PC-3 (cell line): ENCODE measurements at regions of chrX and their contacts with region 1.

Region 1: GRCh38 chrX:106481341-106481740 is 130.4 kb upstream of the RADX start:
- DNase-seq: peak; percentile 83
- ATAC-seq: peak; percentile 74
- H3K4me3 ChIP-seq: no peak overlapping the region
- H3K27ac ChIP-seq: no peak overlapping the region
- H3K4me1 ChIP-seq: no peaks in the 10 kb centered on the region
- H3K27me3 ChIP-seq: no peaks in the 10 kb centered on the region
- CTCF ChIP-seq: peak; percentile 77

Region 2: GRCh38 chrX:106170318-106170717 is 311.0 kb before region 1 on chrX:
- CTCF ChIA-PET with region 1: no interaction called
- POLR2A ChIA-PET with region 1: no interaction called
- intact Hi-C with region 1: no loop called
- DNase-seq: peak; percentile 53
- ATAC-seq: peak; percentile 51; the same call in 1 of the 2 replicates
- H3K4me3 ChIP-seq: no peak overlapping the region
- H3K27ac ChIP-seq: no peak overlapping the region
- H3K4me1 ChIP-seq: no peaks in the 10 kb centered on the region
- H3K27me3 ChIP-seq: peaks cover 37% of the 10 kb centered on the region
- CTCF ChIP-seq: peak; percentile 69

Region 3: GRCh38 chrX:106619797-106620196 is 138.5 kb after region 1 on chrX:
- CTCF ChIA-PET with region 1: no interaction called
- POLR2A ChIA-PET with region 1: no interaction called
- intact Hi-C with region 1: loop called (anchors 1 kb)
- DNase-seq: peak; percentile 34
- ATAC-seq: no peak
- H3K4me3 ChIP-seq: no peak overlapping the region
- H3K27ac ChIP-seq: no peak overlapping the region
- H3K4me1 ChIP-seq: no peaks in the 10 kb centered on the region
- H3K27me3 ChIP-seq: peaks cover 31% of the 10 kb centered on the region
- CTCF ChIP-seq: peak; percentile 66

Region 4: DNA sequence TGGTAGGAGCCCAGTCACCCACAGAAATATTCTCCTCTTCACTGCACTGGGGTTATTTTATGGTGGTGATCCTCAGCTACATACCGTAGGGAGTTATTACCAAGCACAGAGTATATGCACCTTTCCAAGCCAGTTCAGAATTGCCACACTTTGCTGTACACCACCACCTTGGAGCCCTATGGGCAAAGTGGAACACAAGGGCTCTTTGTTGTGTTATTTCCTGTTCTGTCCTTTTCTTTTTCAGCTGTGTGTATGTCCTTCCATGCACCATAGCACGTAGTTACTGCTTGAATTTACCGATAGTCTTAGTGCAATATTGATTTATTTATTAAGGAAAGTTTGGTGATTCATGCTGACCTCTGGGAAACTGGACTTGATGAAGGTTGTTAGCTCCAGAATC is 253.5 kb after region 1 on chrX:
- CTCF ChIA-PET with region 1: no interaction called
- POLR2A ChIA-PET with region 1: no interaction called
- intact Hi-C with region 1: no loop called
- DNase-seq: no peak
- ATAC-seq: no peak
- H3K4me3 ChIP-seq: no peak overlapping the region
- H3K27ac ChIP-seq: no peak overlapping the region
- H3K4me1 ChIP-seq: no peaks in the 10 kb centered on the region
- H3K27me3 ChIP-seq: peaks cover 19% of the 10 kb centered on the region
- CTCF ChIP-seq: no peak

Region 5: GRCh38 chrX:106752086-106752678 is 270.8 kb after region 1 on chrX:
- CTCF ChIA-PET with region 1: no interaction called
- POLR2A ChIA-PET with region 1: no interaction called
- intact Hi-C with region 1: loop called (anchors 5 kb)
- DNase-seq: peak; percentile 23
- ATAC-seq: no peak
- H3K4me3 ChIP-seq: no peak overlapping the region
- H3K27ac ChIP-seq: no peak overlapping the region
- H3K4me1 ChIP-seq: no peaks in the 10 kb centered on the region
- H3K27me3 ChIP-seq: no peaks in the 10 kb centered on the region
- CTCF ChIP-seq: peak; percentile 42